IMR-90 (cell line): ENCODE measurements at regions of chr4 and their contacts with region 1.

Region 1: DNA sequence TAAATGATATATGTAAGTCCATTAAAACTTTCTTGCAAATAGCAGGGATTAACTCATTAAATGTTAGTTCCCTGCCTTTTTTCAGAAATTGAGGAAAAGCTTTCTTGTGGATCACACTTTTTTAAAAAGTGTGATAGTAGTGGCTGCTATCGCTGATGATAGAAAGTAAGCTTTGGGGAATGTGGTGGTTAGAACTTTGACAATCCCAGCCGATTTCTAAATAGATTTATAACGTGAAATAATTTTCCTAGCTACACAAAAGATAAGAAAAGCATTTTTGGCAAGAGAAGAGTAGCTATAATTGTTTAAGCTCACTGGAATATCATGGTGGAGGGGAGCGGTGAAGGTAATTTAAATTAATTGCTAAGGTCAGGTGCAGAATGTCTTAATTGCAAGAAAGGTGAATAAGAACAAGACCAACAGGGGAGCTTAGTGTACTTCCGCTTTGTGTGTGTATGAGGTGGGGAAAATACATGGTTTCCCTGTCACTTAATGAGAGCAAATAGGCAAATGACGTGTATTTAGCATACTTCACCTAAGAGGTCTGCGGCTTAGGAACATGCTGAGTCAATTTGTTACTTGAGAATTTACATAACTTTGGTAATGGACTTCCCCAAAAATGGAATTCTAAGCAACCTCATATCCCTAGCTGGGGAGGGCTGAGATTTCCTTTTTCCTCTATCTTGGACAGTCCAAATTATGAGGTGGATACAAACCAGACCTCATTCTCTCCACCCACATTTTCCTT is 11.7 kb upstream of the IL21 start:
- DNase-seq: peak; percentile 47
- ATAC-seq: no peak
- H3K4me3 ChIP-seq: no peak overlapping the region
- H3K27ac ChIP-seq: no peak overlapping the region
- H3K4me1 ChIP-seq: no peaks in the 10 kb centered on the region
- H3K27me3 ChIP-seq: peaks cover 3% of the 10 kb centered on the region; the same call in 1 of the 2 replicates
- CTCF ChIP-seq: no peak
- POLR2A ChIP-seq: no peak
- RAD21 ChIP-seq: no peak

Region 2: GRCh38 chr4:122810669-122811068 is 178.1 kb after region 1 on chr4:
- CTCF ChIA-PET with region 1: interaction called, 10 read pairs
- POLR2A ChIA-PET with region 1: no interaction called
- dilution Hi-C with region 1: no loop called
- in situ Hi-C with region 1: no loop called
- intact Hi-C with region 1: no loop called
- DNase-seq: peak; percentile 41
- ATAC-seq: peak; percentile 59
- H3K4me3 ChIP-seq: no peak overlapping the region
- H3K27ac ChIP-seq: no peak overlapping the region
- H3K4me1 ChIP-seq: peaks cover 3% of the 10 kb centered on the region
- H3K27me3 ChIP-seq: no peaks in the 10 kb centered on the region
- CTCF ChIP-seq: no peak
- POLR2A ChIP-seq: no peak
- RAD21 ChIP-seq: no peak